ENCODE measurements at regions of chr4 and their contacts with region 1.

Region 1: DNA sequence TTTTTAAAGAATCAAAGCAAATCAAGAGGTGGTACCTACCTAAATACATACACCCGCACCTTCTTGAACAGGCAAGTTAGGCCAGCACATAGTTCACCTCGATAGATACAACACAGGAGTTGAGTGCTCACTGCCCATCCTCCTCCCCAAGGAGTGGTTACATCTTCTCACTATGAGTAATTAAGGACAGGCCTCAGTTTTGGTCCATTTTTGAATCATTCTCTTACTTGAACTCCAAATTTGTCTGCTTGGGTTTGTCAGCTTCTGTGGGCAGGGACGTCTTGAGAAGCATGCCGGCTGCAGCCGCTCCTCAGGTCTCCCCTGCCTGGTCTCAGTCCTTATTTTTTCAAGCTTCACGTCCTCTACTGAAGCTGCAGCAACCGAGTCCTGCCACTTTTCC is 190.6 kb upstream of the RBPJ start:
- DNase-seq: peak; percentile 67
- H3K4me3 Mint-ChIP-seq: peak overlapping the region; percentile 51
- H3K27ac Mint-ChIP-seq: peak overlapping the region; percentile 76
- H3K4me1 Mint-ChIP-seq: peaks cover 59% of the 10 kb centered on the region
- H3K27me3 Mint-ChIP-seq: no peaks in the 10 kb centered on the region

Region 2: DNA sequence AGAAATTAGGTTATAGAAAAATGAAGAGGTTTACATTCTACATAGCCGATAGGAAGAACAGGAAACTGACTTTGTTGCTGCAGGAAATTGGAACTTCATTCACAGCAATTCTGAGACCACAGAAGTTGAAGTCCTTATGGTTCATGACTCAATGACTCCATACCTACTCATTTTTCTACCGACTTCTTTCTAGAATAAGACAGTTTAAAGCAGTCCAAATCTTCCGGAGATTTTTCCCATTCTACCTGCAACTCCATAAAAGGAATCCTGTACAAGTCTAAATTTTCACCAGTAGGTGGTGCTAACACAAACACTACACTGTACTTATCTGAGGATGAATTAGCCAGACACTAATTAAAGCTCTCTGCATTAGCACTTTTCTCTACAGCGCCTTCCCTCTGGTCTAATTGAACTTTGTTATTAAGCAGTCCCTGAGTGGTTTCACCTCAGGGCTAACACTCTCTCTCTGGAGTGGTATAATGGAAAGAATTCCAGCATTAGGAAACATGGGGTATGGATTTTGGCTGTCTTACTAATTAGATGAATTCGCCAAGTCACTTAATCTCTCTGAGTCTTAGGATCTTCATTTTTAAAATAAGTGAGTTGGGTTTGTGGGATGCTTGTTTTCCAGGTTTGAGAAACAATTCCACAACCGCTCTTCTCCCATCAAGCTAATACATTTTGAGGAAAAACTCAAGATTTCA is 48.2 kb before region 1 on chr4:
- intact Hi-C with region 1: loop called (anchors 1 kb)
- DNase-seq: peak; percentile 64
- H3K4me3 Mint-ChIP-seq: peak overlapping the region; percentile 15
- H3K27ac Mint-ChIP-seq: peak overlapping the region; percentile 89
- H3K4me1 Mint-ChIP-seq: peaks cover 68% of the 10 kb centered on the region
- H3K27me3 Mint-ChIP-seq: no peaks in the 10 kb centered on the region

Region 3: DNA sequence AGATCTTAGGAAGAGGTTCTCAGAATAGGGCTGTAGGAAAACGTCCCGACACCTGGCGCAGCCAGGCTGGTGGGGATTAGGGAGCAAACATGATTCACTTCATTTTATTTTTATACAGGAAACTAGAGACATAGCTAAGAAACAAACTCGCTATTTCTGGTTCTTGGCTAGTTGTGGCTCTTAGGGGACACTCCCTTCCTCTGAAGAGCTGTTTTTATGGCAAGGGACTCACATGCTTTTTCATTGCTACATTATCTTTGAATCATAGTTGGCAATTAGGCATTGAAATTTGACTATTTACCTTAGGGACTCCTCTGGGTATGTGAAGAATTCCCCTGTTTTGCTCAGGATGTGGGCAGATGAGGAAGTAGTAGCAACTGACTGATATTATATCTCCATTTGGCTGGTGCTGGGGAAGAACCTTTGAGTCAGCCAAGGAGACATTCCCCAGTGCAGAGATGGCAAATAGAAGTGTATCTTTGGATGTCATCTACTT is 41.7 kb before region 1 on chr4:
- intact Hi-C with region 1: loop called (anchors 1 kb)
- DNase-seq: peak; percentile 77
- H3K4me3 Mint-ChIP-seq: peak overlapping the region; percentile 80
- H3K27ac Mint-ChIP-seq: peak overlapping the region; percentile 99
- H3K4me1 Mint-ChIP-seq: peaks cover 68% of the 10 kb centered on the region
- H3K27me3 Mint-ChIP-seq: no peaks in the 10 kb centered on the region

Region 4: DNA sequence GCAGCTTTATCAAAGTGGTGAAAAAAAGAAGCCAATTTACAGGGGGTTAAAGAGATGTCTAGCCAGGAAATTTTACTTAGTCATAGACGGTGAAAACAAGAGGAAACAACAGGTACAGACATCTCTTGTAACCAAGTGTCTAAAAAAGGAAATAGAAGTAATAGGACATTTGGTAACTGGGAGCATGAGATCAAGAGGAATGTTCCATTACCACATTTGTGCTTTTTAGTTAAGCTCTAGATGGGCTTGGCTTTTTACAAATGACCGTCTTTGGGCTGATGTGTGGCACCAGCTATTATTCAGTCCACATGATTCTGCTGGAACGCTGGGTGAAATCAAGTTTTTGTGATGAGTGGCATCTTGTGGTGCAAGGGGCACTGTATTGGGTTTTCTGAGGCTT is 36.6 kb before region 1 on chr4:
- intact Hi-C with region 1: loop called (anchors 1 kb)
- DNase-seq: no peak
- H3K4me3 Mint-ChIP-seq: peak overlapping the region; percentile 45
- H3K27ac Mint-ChIP-seq: peak overlapping the region; percentile 96
- H3K4me1 Mint-ChIP-seq: peaks cover 57% of the 10 kb centered on the region
- H3K27me3 Mint-ChIP-seq: no peaks in the 10 kb centered on the region

Region 5: GRCh38 chr4:26144526-26145155 is 14.5 kb after region 1 on chr4:
- intact Hi-C with region 1: loop called (anchors 1 kb)
- DNase-seq: no peak
- H3K4me3 Mint-ChIP-seq: peak overlapping the region; percentile 56
- H3K27ac Mint-ChIP-seq: peak overlapping the region; percentile 98
- H3K4me1 Mint-ChIP-seq: peaks cover 53% of the 10 kb centered on the region
- H3K27me3 Mint-ChIP-seq: no peaks in the 10 kb centered on the region

Region 6: GRCh38 chr4:26248647-26249046 is 118.5 kb after region 1 on chr4:
- intact Hi-C with region 1: no loop called
- DNase-seq: no peak
- H3K4me3 Mint-ChIP-seq: no peak overlapping the region
- H3K27ac Mint-ChIP-seq: no peak overlapping the region
- H3K4me1 Mint-ChIP-seq: peaks cover 3% of the 10 kb centered on the region
- H3K27me3 Mint-ChIP-seq: no peaks in the 10 kb centered on the region